Panc1 (cell line): ENCODE measurements at regions of chr1 and their contacts with region 1.

Region 1: GRCh38 chr1:104406728-104407127 is 657.0 kb downstream of the AMY1C start:
- DNase-seq: no peak
- ATAC-seq: no peak
- H3K4me3 ChIP-seq: no peak overlapping the region
- H3K27ac ChIP-seq: no peak overlapping the region
- H3K4me1 ChIP-seq: no peaks in the 10 kb centered on the region
- H3K27me3 ChIP-seq: no peaks in the 10 kb centered on the region
- CTCF ChIP-seq: no peak

Region 2: DNA sequence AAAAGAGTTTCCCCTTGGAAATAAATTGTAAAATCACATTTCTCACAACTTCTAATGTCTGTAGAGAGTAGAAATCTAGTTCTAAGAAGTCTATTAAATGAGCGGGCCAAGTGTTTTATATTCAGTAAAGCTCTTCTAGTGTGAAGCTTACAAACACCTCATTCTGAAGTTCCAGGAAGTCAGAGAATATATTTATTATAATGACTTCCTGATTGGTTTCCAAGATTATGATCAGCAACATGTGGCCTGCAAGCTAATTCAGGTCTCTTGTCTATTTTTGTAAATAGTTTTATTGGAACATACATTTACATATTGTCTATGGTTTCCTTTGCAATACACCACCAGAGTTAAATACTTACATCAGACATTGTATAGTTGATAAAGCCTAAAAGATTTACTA is 53.1 kb before region 1 on chr1:
- CTCF ChIA-PET with region 1: no interaction called
- POLR2A ChIA-PET with region 1: no interaction called
- in situ Hi-C with region 1: no loop called
- intact Hi-C with region 1: loop called (anchors 10 kb)
- DNase-seq: no peak
- ATAC-seq: no peak
- H3K4me3 ChIP-seq: no peak overlapping the region
- H3K27ac ChIP-seq: no peak overlapping the region
- H3K4me1 ChIP-seq: no peaks in the 10 kb centered on the region
- H3K27me3 ChIP-seq: no peaks in the 10 kb centered on the region
- CTCF ChIP-seq: no peak